Calu3 (cell line): ENCODE measurements at regions of chr5 and their contacts with region 1.

Region 1: DNA sequence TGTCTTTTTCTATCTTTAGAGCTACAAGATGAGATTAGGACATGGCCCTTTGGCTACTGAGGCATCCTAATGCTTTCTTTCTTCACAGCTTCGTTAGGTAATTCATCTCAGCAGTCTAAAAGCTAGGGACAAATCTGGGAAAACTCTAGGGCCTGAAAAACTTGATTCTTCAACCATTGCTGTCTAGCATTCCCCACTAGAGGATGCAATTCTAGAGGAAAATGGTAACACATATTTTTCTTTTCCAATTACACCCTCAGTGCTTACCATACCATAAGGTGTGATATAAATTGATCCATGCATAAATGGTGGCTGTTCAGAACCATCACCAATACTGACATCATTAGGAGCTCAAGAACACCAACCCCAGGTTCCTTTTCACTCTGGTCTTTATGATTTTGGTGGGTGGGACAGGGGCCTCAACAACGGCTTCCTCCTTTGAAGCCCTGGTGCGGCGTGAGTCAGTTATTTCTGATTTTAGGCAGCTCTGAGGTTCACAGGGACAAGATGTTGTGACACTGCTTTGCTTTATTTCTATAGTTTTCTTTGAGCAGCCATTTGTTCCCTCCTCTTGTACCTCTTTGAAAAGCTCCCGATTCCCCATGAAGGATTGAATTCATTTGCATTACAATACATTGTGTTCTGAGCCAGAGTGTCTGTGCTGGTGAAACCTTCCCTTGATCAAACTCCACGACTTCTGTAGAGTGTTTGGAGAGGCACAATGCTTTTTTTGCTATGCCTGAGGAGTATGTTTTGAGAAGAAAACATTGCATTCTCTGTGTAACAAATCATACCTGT is 526.0 kb upstream of the TRPC7 start:
- DNase-seq: no peak
- H3K4me3 Mint-ChIP-seq: no peak overlapping the region
- H3K27ac Mint-ChIP-seq: no peak overlapping the region
- H3K4me1 Mint-ChIP-seq: no peaks in the 10 kb centered on the region
- H3K27me3 Mint-ChIP-seq: peaks cover 34% of the 10 kb centered on the region
- CTCF ChIP-seq: no peak

Region 2: GRCh38 chr5:136638077-136638476 is 253.3 kb before region 1 on chr5:
- CTCF ChIA-PET with region 1: no interaction called
- intact Hi-C with region 1: no loop called
- DNase-seq: no peak
- H3K4me3 Mint-ChIP-seq: no peak overlapping the region
- H3K27ac Mint-ChIP-seq: no peak overlapping the region
- H3K4me1 Mint-ChIP-seq: no peaks in the 10 kb centered on the region
- H3K27me3 Mint-ChIP-seq: peaks cover 82% of the 10 kb centered on the region
- CTCF ChIP-seq: no peak

Region 3: DNA sequence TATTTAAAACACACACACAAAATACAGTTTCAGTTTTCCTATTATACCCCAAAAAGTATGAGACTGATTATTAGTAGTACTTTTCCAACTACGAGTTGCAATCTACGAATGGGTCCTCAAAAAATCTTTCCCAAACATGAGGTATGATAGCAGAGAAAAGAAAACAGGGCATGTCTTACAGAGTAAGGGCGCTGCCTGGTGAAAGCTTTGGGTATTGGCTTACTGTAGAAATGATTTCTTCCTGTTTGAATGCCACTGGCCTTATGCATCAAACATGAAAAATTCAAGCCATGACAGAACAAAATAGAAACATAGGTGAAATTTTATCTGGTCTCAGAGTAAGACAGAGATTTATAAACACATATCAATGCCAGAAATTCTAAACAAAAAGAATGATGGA is 159.8 kb after region 1 on chr5:
- CTCF ChIA-PET with region 1: no interaction called
- intact Hi-C with region 1: loop called (anchors 2 kb)
- DNase-seq: peak; percentile 36
- H3K4me3 Mint-ChIP-seq: no peak overlapping the region
- H3K27ac Mint-ChIP-seq: no peak overlapping the region
- H3K4me1 Mint-ChIP-seq: no peaks in the 10 kb centered on the region
- H3K27me3 Mint-ChIP-seq: no peaks in the 10 kb centered on the region
- CTCF ChIP-seq: peak; percentile 44

Region 4: DNA sequence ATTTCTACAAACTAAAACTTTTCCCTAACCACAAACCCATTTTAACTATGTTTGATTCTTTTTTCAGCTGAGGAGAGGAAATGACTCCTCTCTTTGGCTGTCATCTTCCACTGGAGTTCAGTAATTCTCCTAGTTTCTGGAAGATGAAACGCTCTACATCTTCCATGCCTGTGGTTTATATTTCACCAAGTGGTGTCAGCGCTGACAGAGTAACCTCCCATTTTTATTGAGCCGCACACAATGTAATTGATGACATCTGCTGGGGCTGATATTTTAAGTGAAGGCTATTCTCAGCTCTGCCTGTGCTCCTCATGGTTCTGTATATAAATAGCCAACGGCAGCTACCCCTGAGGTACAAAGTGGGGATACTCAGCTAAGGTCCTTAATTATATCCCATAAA is 373.2 kb after region 1 on chr5:
- CTCF ChIA-PET with region 1: no interaction called
- intact Hi-C with region 1: no loop called
- DNase-seq: no peak
- H3K4me3 Mint-ChIP-seq: no peak overlapping the region
- H3K27ac Mint-ChIP-seq: no peak overlapping the region
- H3K4me1 Mint-ChIP-seq: no peaks in the 10 kb centered on the region
- H3K27me3 Mint-ChIP-seq: peaks cover 81% of the 10 kb centered on the region
- CTCF ChIP-seq: no peak

Region 5: DNA sequence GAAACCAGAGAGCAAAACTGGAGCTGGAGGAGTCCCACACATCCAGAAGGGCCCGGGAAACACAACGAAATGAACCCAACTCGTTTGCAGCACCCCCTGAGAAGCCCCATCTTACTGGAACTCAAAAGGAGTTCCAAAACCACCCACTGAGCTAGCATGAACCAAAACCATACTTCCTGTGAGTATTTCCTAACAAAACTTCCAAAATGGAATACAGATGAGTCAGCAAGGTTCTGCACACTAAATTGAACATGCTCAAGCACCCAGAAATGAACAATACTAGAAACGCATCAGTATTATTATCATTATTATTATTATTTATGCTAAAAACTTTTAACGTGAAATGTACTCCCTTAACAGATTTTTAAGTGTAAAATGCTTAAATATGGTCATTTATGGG is 615.8 kb after region 1 on chr5:
- CTCF ChIA-PET with region 1: no interaction called
- intact Hi-C with region 1: no loop called
- DNase-seq: no peak
- H3K4me3 Mint-ChIP-seq: no peak overlapping the region
- H3K27ac Mint-ChIP-seq: no peak overlapping the region
- H3K4me1 Mint-ChIP-seq: no peaks in the 10 kb centered on the region
- H3K27me3 Mint-ChIP-seq: peaks cover 44% of the 10 kb centered on the region
- CTCF ChIP-seq: no peak